ENCODE measurements at regions of chr20 and their contacts with region 1.

Region 1: GRCh38 chr20:38073307-38074071 is 39.9 kb downstream of the RPRD1B start:
- DNase-seq: peak; percentile 64
- ATAC-seq: peak; percentile 75

Region 2: GRCh38 chr20:37941332-37941731 is 132.2 kb before region 1 on chr20:
- intact Hi-C with region 1: no loop called
- DNase-seq: no peak
- ATAC-seq: no peak

Region 3: GRCh38 chr20:38131588-38132554 is 58.4 kb after region 1 on chr20:
- intact Hi-C with region 1: no loop called
- DNase-seq: no peak
- ATAC-seq: no peak

Region 4: GRCh38 chr20:38143646-38144554 is 70.4 kb after region 1 on chr20:
- intact Hi-C with region 1: no loop called
- DNase-seq: no peak
- ATAC-seq: peak; percentile 57

Region 5: DNA sequence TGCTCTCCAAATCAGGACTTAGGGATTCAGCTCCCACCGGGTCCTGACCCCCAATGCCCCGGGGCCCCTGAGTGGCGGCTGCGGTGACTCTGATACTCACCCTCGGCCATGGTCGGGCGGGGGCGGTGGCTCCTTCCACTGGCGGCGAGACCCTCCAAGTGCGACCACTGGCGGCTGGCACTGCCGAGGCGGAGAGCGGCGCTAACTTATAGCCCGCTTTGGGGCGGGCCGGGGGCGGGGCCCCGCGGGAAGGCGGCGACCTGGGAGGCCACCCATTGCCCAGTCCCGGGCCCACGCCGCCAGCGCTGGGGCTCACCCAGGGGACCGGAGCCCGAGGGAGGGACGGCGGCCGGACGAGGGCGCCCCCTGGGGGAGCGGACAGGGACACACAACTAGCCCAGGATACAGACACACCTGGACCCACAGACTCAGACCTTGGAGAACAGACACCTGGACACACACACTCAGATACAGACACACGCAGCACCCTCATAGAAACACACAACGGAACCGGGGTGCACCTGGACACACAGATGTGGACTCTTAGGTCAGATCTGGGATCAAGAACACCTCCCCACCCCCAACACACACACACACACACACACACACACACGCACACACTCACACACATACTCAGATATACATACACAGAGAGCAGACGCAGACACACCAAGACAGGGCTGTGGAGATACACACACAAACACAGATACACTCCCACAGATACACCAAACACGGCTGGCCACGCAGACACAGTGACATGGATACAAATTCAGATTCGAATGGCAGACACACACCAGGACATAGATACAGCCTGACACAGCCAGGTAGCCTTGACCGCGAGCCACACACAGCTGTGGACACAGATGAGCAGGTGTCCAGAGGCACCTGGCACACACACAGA is 91.8 kb after region 1 on chr20 and contains the start of gene TGM2:
- intact Hi-C with region 1: loop called (anchors 2 kb)
- DNase-seq: peak; percentile 88
- ATAC-seq: peak; percentile 90
- total RNA-seq, gene TGM2: 469 TPM

Measured in Right ventricle myocardium superior (tissue), 1 donor.